ENCODE measurements at regions of chr10 and their contacts with region 1.

Region 1: DNA sequence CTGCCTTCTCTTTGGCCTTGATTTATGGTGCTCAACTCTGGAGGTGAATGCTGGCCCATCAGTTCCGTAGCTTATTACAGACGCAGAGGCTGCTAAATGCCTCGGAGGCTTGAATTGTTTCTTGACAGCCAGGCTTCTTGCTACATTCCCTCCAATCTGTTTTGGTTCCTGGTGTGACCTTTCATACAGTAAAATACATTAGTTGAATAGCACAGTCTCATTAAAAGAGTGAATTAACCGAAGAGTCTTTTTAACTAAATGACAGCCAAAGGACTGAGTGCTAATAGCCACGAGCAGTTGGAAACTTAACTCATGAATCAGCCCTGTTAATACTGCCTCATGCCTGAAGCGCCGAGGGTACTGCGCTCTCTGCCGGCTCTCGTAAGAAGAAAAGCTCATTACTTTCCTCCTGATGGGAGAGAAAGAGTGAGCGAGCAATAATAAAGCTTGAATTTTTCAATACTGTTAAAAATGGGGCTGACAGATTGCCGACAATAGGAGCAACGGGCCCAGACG is 236.4 kb upstream of the GPR26 start:
- DNase-seq: no peak
- H3K4me3 ChIP-seq: no peak overlapping the region
- H3K27ac ChIP-seq: no peak overlapping the region
- H3K4me1 ChIP-seq: peaks cover 2 to 5% (median 3%) of the 10 kb centered on the region in 4 experiments; a peak in 4 of 7 replicates
- H3K27me3 ChIP-seq: no peaks in the 10 kb centered on the region
- CTCF ChIP-seq: no peak
- EP300 ChIP-seq: no peak
- POLR2A ChIP-seq: no peak
- RAD21 ChIP-seq: peak in 1 of 2 experiments; percentile 15; a peak in 1 of 4 replicates

Region 2: DNA sequence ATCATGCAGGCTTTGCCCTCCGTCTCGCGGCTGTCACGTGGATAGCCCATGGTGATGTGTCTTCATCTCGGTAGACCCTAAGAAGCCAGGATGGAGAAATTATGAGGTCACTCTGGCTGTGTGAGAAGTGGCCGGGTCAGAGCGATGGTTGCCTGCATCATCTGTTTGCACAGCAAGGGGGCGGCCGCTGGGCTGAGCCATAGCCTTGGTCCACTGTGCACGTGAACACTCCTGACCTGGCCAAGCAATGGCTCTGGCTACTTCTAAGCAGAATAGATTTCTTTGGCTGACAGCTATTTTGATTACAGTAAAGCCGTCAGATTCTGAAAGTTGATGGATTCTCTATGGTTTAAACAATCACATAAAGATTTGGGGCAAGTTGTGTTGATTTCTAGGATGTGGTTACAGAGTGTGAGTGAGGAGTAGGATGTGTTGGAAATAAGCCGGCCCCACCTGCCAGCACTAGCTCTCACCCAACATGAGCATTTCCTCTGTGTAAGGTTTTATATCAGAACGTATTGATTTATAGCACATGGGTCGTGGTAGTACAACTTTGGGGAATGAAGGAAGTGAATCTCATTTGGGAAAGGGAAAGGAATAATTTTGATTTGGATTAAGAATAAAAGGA is 22.0 kb after region 1 on chr10:
- CTCF ChIA-PET with region 1: interaction called, 10 read pairs
- POLR2A ChIA-PET with region 1: no interaction called
- DNase-seq: no peak
- H3K4me3 ChIP-seq: no peak overlapping the region
- H3K27ac ChIP-seq: no peak overlapping the region
- H3K4me1 ChIP-seq: no peaks in the 10 kb centered on the region
- H3K27me3 ChIP-seq: no peaks in the 10 kb centered on the region
- CTCF ChIP-seq: peak in 2 of 3 experiments; percentile 13 to 25; a peak in 2 of 4 replicates
- EP300 ChIP-seq: no peak
- POLR2A ChIP-seq: no peak
- RAD21 ChIP-seq: peak in 1 of 2 experiments; percentile 24; a peak in 1 of 4 replicates

Measured in H1 (cell line).